ENCODE measurements at regions of chr1 and their contacts with region 1.

Region 1: DNA sequence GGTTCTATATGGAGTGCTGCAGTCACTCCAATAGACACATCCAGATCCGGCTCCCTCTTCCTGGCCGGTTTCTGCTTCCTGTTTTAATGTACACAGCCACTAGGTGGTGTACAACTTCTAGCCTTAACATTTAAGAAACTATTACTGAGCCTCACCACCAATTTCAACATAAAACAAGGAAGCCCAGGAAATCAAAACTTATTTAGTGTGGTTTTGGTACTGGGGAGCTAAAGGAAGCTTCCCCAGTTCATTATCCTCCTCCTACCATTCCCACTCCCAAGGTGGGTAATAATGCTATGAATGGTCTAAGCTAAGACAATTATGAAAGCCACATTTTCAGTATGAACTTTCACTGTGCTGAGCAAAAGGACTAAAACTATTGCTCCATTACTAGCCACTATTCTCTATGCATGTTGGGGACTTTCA is 25.5 kb upstream of the MTMR11 start:
- DNase-seq: no peak
- H3K4me3 ChIP-seq: no peak overlapping the region
- H3K27ac ChIP-seq: peak overlapping the region in 5 of 8 donors; percentile 30 to 64 (median 41)
- H3K4me1 ChIP-seq: peaks cover 8 to 20% (median 11%) of the 10 kb centered on the region in 6 donors
- H3K27me3 ChIP-seq: no peaks in the 10 kb centered on the region
- CTCF ChIP-seq: peak; percentile 51 to 90 (median 80)
- POLR2A ChIP-seq: no peak

Region 2: DNA sequence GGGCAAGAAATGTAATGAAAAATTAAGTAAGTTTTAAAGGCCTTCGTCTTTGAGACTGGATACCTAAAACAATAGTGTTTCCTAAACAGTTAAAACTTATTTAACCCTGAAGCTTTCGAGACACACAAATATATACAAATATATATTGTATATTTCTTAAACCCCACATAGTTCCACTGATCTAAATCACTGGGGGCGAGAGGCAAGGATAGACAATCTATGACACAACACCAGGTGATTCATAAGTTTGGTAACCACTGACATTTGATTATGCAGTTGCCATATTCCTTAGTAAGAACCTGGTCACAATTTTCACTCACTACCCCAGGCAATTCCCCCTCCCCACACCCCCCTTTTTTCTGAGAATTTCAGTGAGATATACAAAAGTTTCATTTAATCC is 118.0 kb before region 1 on chr1:
- intact Hi-C with region 1: no loop called
- DNase-seq: no peak
- H3K4me3 ChIP-seq: peak overlapping the region; percentile 35 to 70 (median 44)
- H3K27ac ChIP-seq: peak overlapping the region; percentile 88 to 96 (median 92)
- H3K4me1 ChIP-seq: peaks cover 46 to 58% (median 54%) of the 10 kb centered on the region in 6 donors
- H3K27me3 ChIP-seq: no peaks in the 10 kb centered on the region
- CTCF ChIP-seq: no peak
- POLR2A ChIP-seq: no peak

Region 3: DNA sequence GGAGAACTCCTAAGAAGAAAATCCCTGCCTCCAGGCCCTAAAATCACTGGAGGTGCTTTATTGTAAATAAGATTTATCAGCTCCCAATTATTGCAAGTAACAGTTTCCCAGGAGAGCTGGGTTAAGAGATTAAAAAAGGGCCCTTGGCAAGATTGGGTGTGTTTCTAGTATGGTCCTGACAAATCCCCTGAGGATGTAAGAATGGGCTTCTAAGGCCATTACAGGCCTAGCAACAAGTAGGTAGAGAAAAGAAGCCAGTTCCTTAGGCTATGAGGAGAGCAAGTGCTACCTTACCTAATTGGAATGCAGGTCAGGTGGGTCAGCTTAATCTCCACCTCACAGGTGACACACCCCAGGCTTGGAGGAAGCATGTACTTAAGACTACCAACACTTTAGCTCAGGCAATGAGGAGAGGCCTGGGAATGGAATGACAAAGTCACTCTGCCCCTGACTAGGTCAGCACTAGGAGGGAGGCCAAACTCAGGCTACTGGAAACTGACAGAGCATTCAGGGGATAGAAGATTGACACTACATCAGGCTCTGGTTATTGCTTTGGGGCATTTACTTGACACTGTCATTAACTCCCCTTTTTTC is 55.2 kb after region 1 on chr1:
- intact Hi-C with region 1: loop called (anchors 5 kb)
- DNase-seq: no peak
- H3K4me3 ChIP-seq: no peak overlapping the region
- H3K27ac ChIP-seq: no peak overlapping the region
- H3K4me1 ChIP-seq: peaks cover 0 to 4% (median 0%) of the 10 kb centered on the region in 6 donors
- H3K27me3 ChIP-seq: peaks cover 0 to 31% (median 0%) of the 10 kb centered on the region in 7 donors
- CTCF ChIP-seq: no peak
- POLR2A ChIP-seq: no peak

Region 4: GRCh38 chr1:150049926-150050325 is 87.8 kb after region 1 on chr1:
- intact Hi-C with region 1: loop called (anchors 5 kb)
- DNase-seq: no peak
- H3K4me3 ChIP-seq: no peak overlapping the region
- H3K27ac ChIP-seq: no peak overlapping the region
- H3K4me1 ChIP-seq: peaks cover 0 to 38% (median 10%) of the 10 kb centered on the region in 6 donors
- H3K27me3 ChIP-seq: no peaks in the 10 kb centered on the region
- CTCF ChIP-seq: no peak
- POLR2A ChIP-seq: no peak